Common myeloid progenitor, CD34-positive (primary cell): ENCODE measurements at regions of chr1 and their contacts with region 1.

Region 1: GRCh38 chr1:204763706-204764427 is 78.3 kb upstream of the LRRN2 start:
- DNase-seq: peak; percentile 69 to 84 (median 83)
- H3K4me3 ChIP-seq: peak overlapping the region in 2 of 7 experiments; percentile 12 to 48
- H3K27ac ChIP-seq: no peak overlapping the region
- H3K4me1 ChIP-seq: peaks cover 0 to 10% (median 5%) of the 10 kb centered on the region in 4 experiments
- H3K27me3 ChIP-seq: peaks cover 0 to 23% (median 2%) of the 10 kb centered on the region in 5 experiments

Region 2: DNA sequence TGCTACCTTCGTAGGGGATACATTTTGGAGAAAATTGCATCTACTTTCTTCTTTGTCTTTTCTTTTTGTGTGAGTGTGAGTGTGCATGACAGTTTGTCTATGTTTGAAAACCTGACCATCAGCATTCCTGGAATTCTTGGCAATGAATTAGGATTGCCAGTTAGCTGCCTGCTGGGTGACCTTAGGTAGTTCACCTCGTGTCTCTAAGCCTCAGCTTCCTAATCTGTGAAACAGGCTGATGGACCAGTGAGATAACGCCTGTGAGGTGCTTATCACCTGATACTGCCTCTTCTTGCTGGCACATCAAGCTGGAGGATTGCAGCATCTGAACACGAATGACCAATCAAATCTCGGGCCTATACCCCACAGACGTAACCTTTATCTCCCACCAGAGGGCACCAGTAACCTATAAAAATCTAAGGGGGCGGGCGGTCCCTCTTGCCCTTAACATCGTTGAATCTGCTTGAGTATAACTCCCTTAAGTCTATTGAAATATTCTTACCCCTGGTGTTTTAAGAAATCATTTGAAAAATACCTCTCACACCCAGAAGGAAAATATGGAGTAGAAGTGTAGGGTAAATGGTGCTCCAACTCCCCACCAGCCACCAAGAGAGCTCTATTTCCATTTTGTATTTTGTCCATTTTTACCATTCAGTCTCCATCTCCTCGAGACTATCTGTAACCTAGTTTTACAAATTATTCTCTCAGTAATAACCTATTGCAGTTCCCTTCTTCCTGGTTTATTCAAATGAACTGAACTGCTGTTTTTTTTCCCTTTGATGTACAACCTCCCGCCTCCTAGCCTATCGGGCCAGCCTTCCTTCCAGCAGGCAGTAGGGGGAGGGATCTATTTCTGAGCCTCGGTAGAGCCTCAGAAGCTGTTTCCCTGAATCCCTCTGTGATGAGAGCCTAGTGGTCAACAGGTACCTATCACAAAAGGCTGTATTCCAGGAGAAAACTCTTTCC is 198.0 kb before region 1 on chr1:
- CTCF ChIA-PET with region 1: interaction called, 20 read pairs
- POLR2A ChIA-PET with region 1: no interaction called
- DNase-seq: peak; percentile 75 to 87 (median 87)
- H3K4me3 ChIP-seq: no peak overlapping the region
- H3K27ac ChIP-seq: no peak overlapping the region
- H3K4me1 ChIP-seq: no peaks in the 10 kb centered on the region
- H3K27me3 ChIP-seq: no peaks in the 10 kb centered on the region

Region 3: GRCh38 chr1:204746838-204747442 is 16.9 kb before region 1 on chr1:
- CTCF ChIA-PET with region 1: interaction called, 14 read pairs
- POLR2A ChIA-PET with region 1: no interaction called
- DNase-seq: peak; percentile 25 to 65 (median 59)
- H3K4me3 ChIP-seq: no peak overlapping the region
- H3K27ac ChIP-seq: no peak overlapping the region
- H3K4me1 ChIP-seq: no peaks in the 10 kb centered on the region
- H3K27me3 ChIP-seq: peaks cover 0 to 10% (median 0%) of the 10 kb centered on the region in 5 experiments

Region 4: GRCh38 chr1:204751894-204752687 is 11.8 kb before region 1 on chr1:
- CTCF ChIA-PET with region 1: interaction called, 14 read pairs
- POLR2A ChIA-PET with region 1: no interaction called
- DNase-seq: no peak
- H3K4me3 ChIP-seq: no peak overlapping the region
- H3K27ac ChIP-seq: no peak overlapping the region
- H3K4me1 ChIP-seq: peaks cover 1 to 8% (median 8%) of the 10 kb centered on the region in 4 experiments
- H3K27me3 ChIP-seq: peaks cover 0 to 5% (median 0%) of the 10 kb centered on the region in 5 experiments